Prostate gland (tissue), 2 donors: ENCODE measurements at regions of chr4 and their contacts with region 1.

Region 1: GRCh38 chr4:181143250-181143854 is 1099.8 kb upstream of the TENM3 start:
- DNase-seq: peak; percentile 65
- H3K4me3 ChIP-seq: no peak overlapping the region
- H3K27ac ChIP-seq: no peak overlapping the region
- H3K4me1 ChIP-seq: no peaks in the 10 kb centered on the region
- H3K27me3 ChIP-seq: no peaks in the 10 kb centered on the region
- CTCF ChIP-seq: peak; percentile 69 to 96 (median 78)
- POLR2A ChIP-seq: no peak

Region 2: DNA sequence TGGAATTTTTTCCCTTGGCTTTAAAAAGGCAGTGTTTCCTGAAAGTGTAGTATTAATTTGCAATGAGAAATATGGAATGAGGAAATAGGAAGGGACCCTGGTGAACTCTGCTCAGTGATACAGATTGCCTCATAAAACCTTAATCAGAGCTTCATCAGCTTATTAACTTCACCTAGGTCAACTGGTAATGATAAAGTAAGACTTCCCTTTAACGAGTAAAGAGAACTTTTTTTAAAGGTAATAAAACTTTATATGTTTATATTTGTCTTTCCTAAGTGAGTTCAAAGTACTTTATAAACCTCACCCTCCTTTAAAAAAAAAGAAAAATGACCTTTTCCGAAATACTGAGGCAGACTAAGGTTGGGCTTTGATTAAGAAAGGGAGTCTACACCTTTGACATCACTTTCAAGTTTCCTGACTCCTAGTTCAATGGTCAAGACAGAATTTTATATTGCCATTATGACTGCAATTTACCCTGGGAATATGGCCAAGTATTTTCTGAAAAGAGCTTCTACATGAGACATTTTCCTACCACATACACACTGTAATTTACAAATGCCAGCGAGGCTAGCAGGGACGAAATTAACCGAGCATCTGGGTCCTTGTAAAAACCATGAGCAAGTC is 393.6 kb after region 1 on chr4:
- intact Hi-C with region 1: loop called (anchors 10 kb)
- DNase-seq: no peak
- H3K4me3 ChIP-seq: no peak overlapping the region
- H3K27ac ChIP-seq: no peak overlapping the region
- H3K4me1 ChIP-seq: no peaks in the 10 kb centered on the region
- H3K27me3 ChIP-seq: no peaks in the 10 kb centered on the region
- CTCF ChIP-seq: no peak
- POLR2A ChIP-seq: no peak